ENCODE measurements at regions of chr7 and their contacts with region 1.

Region 1: GRCh38 chr7:8436965-8437364 is 3.6 kb downstream of the NXPH1 start:
- DNase-seq: peak; percentile 29
- H3K4me3 ChIP-seq: no peak overlapping the region
- H3K27ac ChIP-seq: no peak overlapping the region
- H3K4me1 ChIP-seq: no peaks in the 10 kb centered on the region
- H3K27me3 ChIP-seq: peaks cover 48% of the 10 kb centered on the region
- CTCF ChIP-seq: peak; percentile 78 to 81

Region 2: DNA sequence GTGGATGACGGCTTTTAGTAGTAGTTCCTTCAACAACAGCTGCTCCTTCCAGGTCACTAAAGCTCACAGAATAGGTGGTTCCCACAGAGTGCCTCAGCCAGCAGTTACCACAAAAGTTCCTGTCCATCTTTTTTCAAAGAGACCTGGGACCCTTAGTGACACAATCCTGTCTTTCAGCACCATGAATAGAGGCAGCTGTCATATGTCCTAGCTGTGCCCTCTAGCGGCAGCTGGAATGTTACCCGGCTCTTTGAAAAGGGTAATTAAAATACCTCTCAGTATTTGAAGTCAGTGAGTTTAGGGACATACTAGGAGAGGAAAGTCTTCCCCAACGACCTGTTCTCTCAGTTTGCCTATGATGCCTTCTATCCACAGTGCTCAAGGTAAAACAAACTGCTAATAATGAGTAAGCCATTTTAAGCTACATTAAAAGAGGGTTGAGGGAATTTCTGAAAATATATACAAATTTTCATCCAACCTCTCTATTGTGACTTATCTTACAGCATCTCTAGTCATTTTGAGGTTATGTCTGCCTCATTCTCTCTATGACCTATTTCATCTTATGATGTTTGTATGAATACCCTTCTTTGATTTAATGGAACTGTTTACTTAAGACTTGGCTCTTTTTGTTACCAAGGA is 287.2 kb after region 1 on chr7:
- CTCF ChIA-PET with region 1: no interaction called
- dilution Hi-C with region 1: no loop called
- in situ Hi-C with region 1: no loop called
- intact Hi-C with region 1: loop called (anchors 5 kb)
- DNase-seq: peak; percentile 1
- H3K4me3 ChIP-seq: no peak overlapping the region
- H3K27ac ChIP-seq: no peak overlapping the region
- H3K4me1 ChIP-seq: no peaks in the 10 kb centered on the region
- H3K27me3 ChIP-seq: no peaks in the 10 kb centered on the region
- CTCF ChIP-seq: peak; percentile 32 to 57

Region 3: DNA sequence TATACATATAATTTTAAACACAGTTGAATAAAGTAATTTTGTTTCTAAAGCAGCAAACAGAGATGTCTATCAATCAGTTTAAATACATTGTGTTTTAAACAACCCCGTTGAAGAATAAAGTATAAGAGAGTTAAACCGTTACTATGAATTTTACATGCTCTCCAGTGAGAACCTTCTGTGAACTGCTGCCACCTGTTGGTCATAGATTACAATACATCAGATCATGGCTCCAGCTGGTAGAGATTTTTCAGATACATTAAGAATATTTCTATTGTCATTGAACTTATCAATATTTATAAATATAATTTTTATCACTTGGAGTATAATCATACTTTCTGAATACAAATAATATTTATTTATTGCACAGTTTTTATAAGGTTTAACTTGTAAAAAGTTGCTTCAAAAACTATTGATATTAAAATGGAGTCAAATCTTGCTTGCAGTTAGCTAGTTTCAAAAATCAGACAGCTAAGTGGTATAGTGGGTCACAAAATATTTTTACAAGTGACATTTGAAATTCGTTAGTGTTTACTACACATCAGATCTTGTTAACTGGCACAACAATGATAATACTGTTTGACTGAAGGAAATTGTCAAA is 1975.6 kb after region 1 on chr7:
- CTCF ChIA-PET with region 1: no interaction called
- dilution Hi-C with region 1: no loop called
- in situ Hi-C with region 1: no loop called
- intact Hi-C with region 1: loop called (anchors 5 kb)
- DNase-seq: peak; percentile 11
- H3K4me3 ChIP-seq: no peak overlapping the region
- H3K27ac ChIP-seq: no peak overlapping the region
- H3K4me1 ChIP-seq: no peaks in the 10 kb centered on the region
- H3K27me3 ChIP-seq: no peaks in the 10 kb centered on the region
- CTCF ChIP-seq: peak; percentile 56 to 65

Measured in mammary epithelial cell (primary cell).